Activated CD4-positive, alpha-beta memory T cell treated with anti-CD3 and anti-CD28 coated beads for 36 hours (primary cell): ENCODE measurements at regions of chr19 and their contacts with region 1.

Region 1: GRCh38 chr19:33161201-33161600 is 29.3 kb downstream of the WDR88 start:
- DNase-seq: no peak
- H3K4me3 Mint-ChIP-seq: no peak overlapping the region
- H3K27ac Mint-ChIP-seq: peak overlapping the region; percentile 86
- H3K4me1 Mint-ChIP-seq: peaks cover 32% of the 10 kb centered on the region
- H3K27me3 Mint-ChIP-seq: no peaks in the 10 kb centered on the region

Region 2: GRCh38 chr19:32478746-32479145 is 682.5 kb before region 1 on chr19:
- CTCF ChIA-PET with region 1: no interaction called
- POLR2A ChIA-PET with region 1: no interaction called
- intact Hi-C with region 1: no loop called
- DNase-seq: no peak
- H3K4me3 Mint-ChIP-seq: no peak overlapping the region
- H3K27ac Mint-ChIP-seq: no peak overlapping the region
- H3K4me1 Mint-ChIP-seq: no peaks in the 10 kb centered on the region
- H3K27me3 Mint-ChIP-seq: no peaks in the 10 kb centered on the region

Region 3: GRCh38 chr19:33186431-33187182 is 25.4 kb after region 1 on chr19:
- CTCF ChIA-PET with region 1: interaction called, 17 read pairs
- POLR2A ChIA-PET with region 1: no interaction called
- intact Hi-C with region 1: no loop called
- DNase-seq: no peak
- H3K4me3 Mint-ChIP-seq: no peak overlapping the region
- H3K27ac Mint-ChIP-seq: no peak overlapping the region
- H3K4me1 Mint-ChIP-seq: no peaks in the 10 kb centered on the region
- H3K27me3 Mint-ChIP-seq: peaks cover 7% of the 10 kb centered on the region